PC-3 (cell line): ENCODE measurements at regions of chr13 and their contacts with region 1.

Region 1: DNA sequence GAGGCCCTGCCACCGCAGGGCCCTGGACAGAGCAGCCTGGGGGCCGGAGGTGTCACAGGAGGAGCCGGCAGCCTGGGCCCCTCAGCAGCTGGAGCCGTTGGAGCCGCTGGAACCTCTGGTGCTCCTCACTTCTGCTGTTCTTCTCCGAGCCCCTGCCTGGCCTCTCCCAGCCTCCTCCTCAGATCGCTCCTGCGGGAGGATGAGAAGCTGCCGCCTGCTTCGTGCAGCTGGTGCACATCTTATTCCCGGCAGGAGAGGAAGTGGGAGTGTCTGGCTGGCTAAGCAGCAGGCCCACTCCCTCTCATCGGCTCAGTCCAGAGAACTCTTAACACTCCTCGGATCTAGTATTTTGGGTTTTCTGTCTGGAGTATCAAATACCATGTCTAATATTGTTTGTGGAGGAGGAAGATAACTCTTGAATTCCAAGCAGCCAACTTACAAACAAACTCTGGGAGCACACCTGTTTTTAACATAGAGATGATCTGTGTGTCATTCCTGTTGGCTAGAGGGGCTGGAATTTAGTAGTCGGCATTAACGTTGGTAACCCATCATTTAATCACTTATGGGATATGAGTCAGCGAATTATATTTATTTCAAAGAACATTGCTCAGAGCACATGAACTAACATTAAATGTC is 37.1 kb upstream of the RNF113B start:
- DNase-seq: peak; percentile 62
- ATAC-seq: peak; percentile 71
- H3K4me3 ChIP-seq: peak overlapping the region; percentile 47
- H3K27ac ChIP-seq: peak overlapping the region; percentile 97
- H3K4me1 ChIP-seq: peaks cover 53% of the 10 kb centered on the region
- H3K27me3 ChIP-seq: no peaks in the 10 kb centered on the region
- CTCF ChIP-seq: no peak

Region 2: GRCh38 chr13:98300956-98301641 is 87.0 kb after region 1 on chr13:
- CTCF ChIA-PET with region 1: no interaction called
- POLR2A ChIA-PET with region 1: no interaction called
- intact Hi-C with region 1: loop called (anchors 1 kb)
- DNase-seq: peak; percentile 76
- ATAC-seq: peak; percentile 83
- H3K4me3 ChIP-seq: peak overlapping the region; percentile 54
- H3K27ac ChIP-seq: peak overlapping the region; percentile 95
- H3K4me1 ChIP-seq: peaks cover 31% of the 10 kb centered on the region
- H3K27me3 ChIP-seq: no peaks in the 10 kb centered on the region
- CTCF ChIP-seq: no peak

Region 3: DNA sequence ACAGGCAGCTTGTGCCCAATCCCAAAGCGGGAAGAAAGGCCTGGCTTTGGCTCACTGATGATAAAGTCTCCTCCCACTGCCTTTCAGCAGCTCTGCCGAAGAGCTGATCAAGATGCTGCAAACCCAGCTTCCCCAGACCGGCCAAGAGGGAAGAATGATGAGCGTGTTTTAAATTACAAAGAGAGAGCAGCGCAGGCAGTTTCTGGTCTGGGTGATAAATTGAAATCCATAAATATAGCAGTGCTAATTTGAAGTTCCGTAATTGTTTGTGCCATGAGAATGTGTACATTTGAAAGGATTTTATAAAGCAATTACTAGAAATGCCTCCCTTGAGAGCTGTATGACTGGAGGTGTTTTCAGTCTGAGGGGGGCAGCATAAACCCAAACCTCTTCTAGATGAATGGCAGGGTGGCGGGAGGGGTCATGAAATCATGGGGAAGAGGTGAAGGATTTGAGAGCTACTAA is 191.0 kb after region 1 on chr13:
- CTCF ChIA-PET with region 1: no interaction called
- POLR2A ChIA-PET with region 1: no interaction called
- intact Hi-C with region 1: no loop called
- DNase-seq: no peak
- ATAC-seq: no peak
- H3K4me3 ChIP-seq: no peak overlapping the region
- H3K27ac ChIP-seq: no peak overlapping the region
- H3K4me1 ChIP-seq: no peaks in the 10 kb centered on the region
- H3K27me3 ChIP-seq: no peaks in the 10 kb centered on the region
- CTCF ChIP-seq: 0 out of 2 replicates have a peak, but pooled peaks have one; percentile 10